ENCODE measurements at regions of chr3 and their contacts with region 1.

Region 1: GRCh38 chr3:160413613-160414248 is 14.3 kb downstream of the SMC4 start:
- DNase-seq: peak; percentile 79
- H3K4me3 Mint-ChIP-seq: no peak overlapping the region
- H3K27ac Mint-ChIP-seq: no peak overlapping the region
- H3K4me1 Mint-ChIP-seq: peaks cover 18% of the 10 kb centered on the region
- H3K27me3 Mint-ChIP-seq: no peaks in the 10 kb centered on the region
- CTCF ChIP-seq: peak; percentile 78

Region 2: DNA sequence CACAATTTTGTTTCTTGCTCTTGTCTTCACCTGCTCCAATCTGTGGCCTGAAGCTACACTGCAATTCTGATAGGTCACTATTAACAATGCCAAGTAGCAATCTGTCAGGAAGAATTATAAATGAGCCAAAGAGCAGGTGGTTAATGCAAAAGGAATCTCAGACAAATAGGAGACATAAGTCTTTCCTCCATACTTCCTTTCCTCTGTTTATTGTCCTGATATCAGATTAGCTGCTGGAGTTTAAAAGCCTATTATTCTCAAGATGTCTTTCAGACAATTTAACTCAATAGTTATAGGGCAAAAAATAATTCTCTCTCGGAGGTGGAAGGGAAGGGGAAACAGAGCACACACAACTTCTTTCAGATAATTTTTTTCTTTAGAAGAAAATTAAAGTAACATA is 1120.2 kb before region 1 on chr3:
- CTCF ChIA-PET with region 1: no interaction called
- POLR2A ChIA-PET with region 1: no interaction called
- intact Hi-C with region 1: no loop called
- DNase-seq: no peak
- H3K4me3 Mint-ChIP-seq: no peak overlapping the region
- H3K27ac Mint-ChIP-seq: no peak overlapping the region
- H3K4me1 Mint-ChIP-seq: no peaks in the 10 kb centered on the region
- H3K27me3 Mint-ChIP-seq: peaks cover 32% of the 10 kb centered on the region
- CTCF ChIP-seq: no peak

Region 3: GRCh38 chr3:160225176-160226025 is 188.3 kb before region 1 on chr3 and contains the start of gene C3orf80:
- CTCF ChIA-PET with region 1: no interaction called
- POLR2A ChIA-PET with region 1: no interaction called
- intact Hi-C with region 1: loop called (anchors 10 kb)
- DNase-seq: peak; percentile 56
- H3K4me3 Mint-ChIP-seq: peak within 1 kb of the TSS; percentile 65
- H3K27ac Mint-ChIP-seq: no peak within 1 kb of the TSS
- H3K4me1 Mint-ChIP-seq: no peaks in the 10 kb centered on the region
- H3K27me3 Mint-ChIP-seq: no peaks in the 10 kb centered on the region
- CTCF ChIP-seq: no peak
- total RNA-seq, gene C3orf80: 0.28 and 0.29 TPM in 2 replicates

Region 4: GRCh38 chr3:160343132-160343531 is 70.6 kb before region 1 on chr3:
- CTCF ChIA-PET with region 1: interaction called, 3 read pairs
- POLR2A ChIA-PET with region 1: no interaction called
- intact Hi-C with region 1: loop called (anchors 5 kb)
- DNase-seq: peak; percentile 36
- H3K4me3 Mint-ChIP-seq: no peak overlapping the region
- H3K27ac Mint-ChIP-seq: no peak overlapping the region
- H3K4me1 Mint-ChIP-seq: no peaks in the 10 kb centered on the region
- H3K27me3 Mint-ChIP-seq: no peaks in the 10 kb centered on the region
- CTCF ChIP-seq: peak; percentile 47

Region 5: GRCh38 chr3:160393346-160394008 is 20.3 kb before region 1 on chr3:
- CTCF ChIA-PET with region 1: interaction called, 12 read pairs
- POLR2A ChIA-PET with region 1: interaction called, 70 read pairs
- intact Hi-C with region 1: no loop called
- DNase-seq: no peak
- H3K4me3 Mint-ChIP-seq: no peak overlapping the region
- H3K27ac Mint-ChIP-seq: no peak overlapping the region
- H3K4me1 Mint-ChIP-seq: peaks cover 32% of the 10 kb centered on the region
- H3K27me3 Mint-ChIP-seq: no peaks in the 10 kb centered on the region
- CTCF ChIP-seq: no peak

Region 6: GRCh38 chr3:160399125-160400029 is 14.4 kb before region 1 on chr3 and contains the starts of genes IFT80 and SMC4:
- CTCF ChIA-PET with region 1: interaction called, 26 read pairs
- POLR2A ChIA-PET with region 1: interaction called, 70 read pairs
- intact Hi-C with region 1: no loop called
- DNase-seq: peak; percentile 97
- H3K4me3 Mint-ChIP-seq: peak within 1 kb of the TSS; percentile 88
- H3K27ac Mint-ChIP-seq: peak within 1 kb of the TSS; percentile 100
- H3K4me1 Mint-ChIP-seq: peaks cover 31% of the 10 kb centered on the region
- H3K27me3 Mint-ChIP-seq: no peaks in the 10 kb centered on the region
- CTCF ChIP-seq: no peak
- total RNA-seq, gene IFT80: 22.6 and 29.0 TPM in 2 replicates
- total RNA-seq, gene SMC4: 89.3 and 116 TPM in 2 replicates

Measured in MCF 10A (cell line).